ENCODE measurements at regions of chr17 and their contacts with region 1.

Region 1: DNA sequence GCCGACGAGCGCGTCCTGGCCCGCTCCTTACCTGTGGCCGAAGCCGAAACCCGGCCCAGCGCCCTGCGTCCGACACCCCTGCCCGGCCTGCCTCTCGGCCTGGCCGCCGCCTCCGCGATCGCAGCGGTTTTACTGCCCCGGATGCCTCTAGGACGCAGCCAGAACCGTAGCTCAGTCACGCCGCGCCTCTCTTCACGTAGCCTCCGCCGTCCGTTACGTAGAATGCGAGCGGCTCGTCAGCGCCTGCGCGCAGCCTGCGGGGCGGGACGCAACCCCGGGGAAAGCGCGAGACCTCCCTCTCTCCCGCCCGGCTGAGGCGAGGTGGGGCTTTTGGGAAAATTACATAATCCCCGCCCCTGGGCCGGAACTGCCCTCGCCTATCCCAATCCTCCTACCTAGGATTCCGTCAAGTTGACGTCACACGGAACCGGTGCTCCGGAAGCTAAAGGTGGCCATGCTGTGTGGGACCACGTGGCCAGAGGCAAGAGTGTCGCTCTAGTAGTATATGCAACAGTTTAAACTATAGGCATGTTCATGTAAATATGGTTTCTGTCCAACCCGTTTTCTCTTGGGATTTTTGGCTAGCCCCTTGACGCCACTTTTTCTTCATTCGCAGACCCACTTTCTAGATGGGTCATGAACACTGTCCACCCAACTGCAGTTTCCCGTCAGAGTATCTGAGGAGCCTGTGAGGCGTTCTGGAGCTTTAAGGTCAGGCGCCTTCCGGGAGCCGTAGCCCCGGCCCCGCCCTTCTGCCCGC is at the start of gene CCDC47:
- DNase-seq: peak; percentile 99
- H3K4me3 ChIP-seq: peak within 1 kb of the TSS; percentile 82 to 96 (median 94)
- H3K27ac ChIP-seq: peak within 1 kb of the TSS; percentile 93 to 98 (median 96)
- H3K4me1 ChIP-seq: peaks cover 15 to 37% (median 31%) of the 10 kb centered on the region in 4 donors
- H3K27me3 ChIP-seq: no peaks in the 10 kb centered on the region
- CTCF ChIP-seq: no peak
- EP300 ChIP-seq: peak; percentile 55
- POLR2A ChIP-seq: peak; percentile 98
- total RNA-seq, gene CCDC47: 78.2 to 129 (median 101) TPM

Region 2: DNA sequence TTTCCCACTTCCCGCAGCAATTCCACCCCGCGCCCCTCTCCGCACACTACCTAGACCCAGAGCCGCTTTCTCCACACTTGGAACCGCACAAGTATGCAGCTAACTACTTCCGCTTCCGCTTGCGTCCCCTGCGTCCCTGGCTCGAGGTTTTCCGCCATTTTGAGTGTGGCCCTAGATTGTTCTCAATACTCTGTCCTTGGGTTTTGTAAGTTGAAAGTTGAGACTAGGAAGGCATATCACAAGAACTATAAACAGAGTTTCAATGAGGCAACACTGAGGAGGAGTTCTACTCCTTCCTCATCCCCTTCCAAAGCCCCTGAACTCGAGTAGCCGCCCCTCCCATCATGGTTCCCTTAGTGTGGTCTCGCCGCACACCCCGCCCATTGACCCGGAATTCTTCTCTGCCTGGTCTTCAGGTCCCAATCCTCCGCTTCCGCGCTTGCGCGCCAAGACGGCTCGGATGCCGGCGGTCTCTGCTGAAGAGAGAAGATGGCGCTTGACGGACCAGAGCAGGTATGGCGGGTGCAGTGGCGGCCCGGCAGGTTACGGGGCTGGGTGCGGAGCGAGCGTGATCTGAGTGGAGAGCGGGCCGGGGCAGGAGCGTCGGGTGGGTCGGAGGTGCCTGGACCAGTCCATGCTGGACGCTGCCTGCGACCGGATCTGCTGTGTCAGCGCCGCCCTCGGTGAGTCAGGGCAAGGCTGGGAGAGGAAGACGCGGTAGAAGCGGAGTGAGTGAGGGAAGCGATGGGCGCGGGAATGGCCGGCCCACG is 53.6 kb after region 1 on chr17 and contains the starts of genes FTSJ3 and PSMC5:
- in situ Hi-C with region 1: loop called in 1 of 4 experiments (anchors 5 kb)
- intact Hi-C with region 1: no loop called
- DNase-seq: peak; percentile 95
- H3K4me3 ChIP-seq: peak within 1 kb of the TSS; percentile 76 to 81 (median 78)
- H3K27ac ChIP-seq: peak within 1 kb of the TSS; percentile 88 to 96 (median 93)
- H3K4me1 ChIP-seq: peaks cover 14 to 29% (median 22%) of the 10 kb centered on the region in 4 donors
- H3K27me3 ChIP-seq: no peaks in the 10 kb centered on the region
- CTCF ChIP-seq: peak; percentile 37 to 84 (median 50)
- EP300 ChIP-seq: no peak
- POLR2A ChIP-seq: peak; percentile 84
- total RNA-seq, gene FTSJ3: 17.7 to 45.9 (median 34.6) TPM
- total RNA-seq, gene PSMC5: 63.2 to 131 (median 77.9) TPM

Region 3: GRCh38 chr17:63842540-63843386 is 69.2 kb after region 1 on chr17 and contains the start of gene SMARCD2:
- in situ Hi-C with region 1: no loop called
- intact Hi-C with region 1: loop called (anchors 10 kb)
- DNase-seq: peak; percentile 99
- H3K4me3 ChIP-seq: peak within 1 kb of the TSS; percentile 76 to 99 (median 90)
- H3K27ac ChIP-seq: peak within 1 kb of the TSS; percentile 96 to 99 (median 97)
- H3K4me1 ChIP-seq: peaks cover 26 to 47% (median 42%) of the 10 kb centered on the region in 4 donors
- H3K27me3 ChIP-seq: no peaks in the 10 kb centered on the region
- CTCF ChIP-seq: no peak
- EP300 ChIP-seq: no peak
- POLR2A ChIP-seq: peak; percentile 58
- total RNA-seq, gene SMARCD2: 99.0 to 130 (median 109) TPM

Measured in transverse colon (tissue), 4 donors.